Dendritic cell treated with granulocyte-macrophage colony-stimulating factor and Interleukin-4, amounts not matched to agents 40 ng/mL and 50 ng/mL, for 4 days (primary cell): ENCODE measurements at regions of chr18 and their contacts with region 1.

Region 1: GRCh38 chr18:76859474-76860339 is 37.4 kb downstream of the ZNF236 start:
- H3K4me3 Mint-ChIP-seq: no peak overlapping the region
- H3K27ac Mint-ChIP-seq: no peak overlapping the region
- H3K4me1 Mint-ChIP-seq: no peaks in the 10 kb centered on the region
- H3K27me3 Mint-ChIP-seq: no peaks in the 10 kb centered on the region

Region 2: DNA sequence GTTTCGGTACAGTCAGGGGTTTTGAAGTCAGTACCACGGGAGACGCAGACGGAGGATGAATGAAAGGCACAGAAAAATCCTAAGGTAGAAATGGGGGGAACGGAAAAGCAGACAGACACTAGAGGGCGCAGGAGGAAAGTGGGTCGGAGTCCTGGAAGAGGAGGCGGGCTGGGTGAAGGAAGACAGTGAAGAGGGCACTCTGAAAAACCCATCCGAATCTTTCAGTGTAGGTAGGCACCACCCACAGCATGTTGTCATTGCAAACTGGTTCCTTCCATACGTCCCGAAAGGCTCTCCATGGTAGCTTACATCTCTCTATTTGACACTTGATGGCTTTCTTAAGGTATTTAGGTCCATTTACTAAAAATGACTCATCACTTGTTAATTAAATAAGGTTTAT is 55.9 kb before region 1 on chr18:
- intact Hi-C with region 1: loop called (anchors 10 kb)
- H3K4me3 Mint-ChIP-seq: no peak overlapping the region
- H3K27ac Mint-ChIP-seq: no peak overlapping the region
- H3K4me1 Mint-ChIP-seq: peaks cover 16% of the 10 kb centered on the region
- H3K27me3 Mint-ChIP-seq: peaks cover 23% of the 10 kb centered on the region